ENCODE measurements at regions of chr11 and their contacts with region 1.

Region 1: GRCh38 chr11:95067039-95067840 is 521 bp downstream of the SRSF8 start:
- DNase-seq: peak; percentile 89
- H3K4me3 ChIP-seq: peak overlapping the region; percentile 68
- H3K27ac ChIP-seq: peak overlapping the region; percentile 86
- H3K4me1 ChIP-seq: peaks cover 9% of the 10 kb centered on the region
- H3K27me3 ChIP-seq: no peaks in the 10 kb centered on the region
- CTCF ChIP-seq: peak; percentile 64

Region 2: GRCh38 chr11:94776351-94777321 is 290.6 kb before region 1 on chr11:
- CTCF ChIA-PET with region 1: no interaction called
- POLR2A ChIA-PET with region 1: no interaction called
- intact Hi-C with region 1: loop called (anchors 10 kb)
- DNase-seq: peak; percentile 77
- H3K4me3 ChIP-seq: no peak overlapping the region
- H3K27ac ChIP-seq: no peak overlapping the region
- H3K4me1 ChIP-seq: peaks cover 28% of the 10 kb centered on the region
- H3K27me3 ChIP-seq: no peaks in the 10 kb centered on the region
- CTCF ChIP-seq: no peak

Region 3: GRCh38 chr11:94849839-94850238 is 217.4 kb before region 1 on chr11:
- CTCF ChIA-PET with region 1: no interaction called
- POLR2A ChIA-PET with region 1: no interaction called
- intact Hi-C with region 1: no loop called
- DNase-seq: peak; percentile 76
- H3K4me3 ChIP-seq: no peak overlapping the region
- H3K27ac ChIP-seq: peak overlapping the region; percentile 17
- H3K4me1 ChIP-seq: peaks cover 8% of the 10 kb centered on the region
- H3K27me3 ChIP-seq: no peaks in the 10 kb centered on the region
- CTCF ChIP-seq: no peak

Region 4: DNA sequence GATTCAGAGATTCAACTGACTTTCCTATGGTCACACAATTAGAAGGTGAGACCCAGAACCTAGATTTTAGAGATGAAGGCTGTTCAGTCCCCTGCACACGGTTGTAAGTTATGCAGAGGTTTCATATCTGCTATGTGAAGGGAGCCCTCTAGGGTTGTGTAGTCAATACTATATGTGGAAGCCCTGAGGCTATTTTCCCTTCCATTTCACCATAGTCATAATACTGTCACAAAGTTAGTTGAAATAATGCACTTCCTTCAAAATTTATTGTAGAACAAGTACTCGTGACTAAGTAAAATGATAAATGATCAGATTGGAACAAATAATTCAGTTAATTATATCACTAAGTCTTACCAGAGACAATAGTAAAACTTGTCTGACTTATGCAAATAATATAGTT is 71.2 kb after region 1 on chr11:
- CTCF ChIA-PET with region 1: interaction called, 3 read pairs
- POLR2A ChIA-PET with region 1: no interaction called
- intact Hi-C with region 1: loop called (anchors 2 kb)
- DNase-seq: peak; percentile 53
- H3K4me3 ChIP-seq: no peak overlapping the region
- H3K27ac ChIP-seq: no peak overlapping the region
- H3K4me1 ChIP-seq: no peaks in the 10 kb centered on the region
- H3K27me3 ChIP-seq: no peaks in the 10 kb centered on the region
- CTCF ChIP-seq: peak; percentile 63

Region 5: GRCh38 chr11:95705485-95706124 is 638.4 kb after region 1 on chr11:
- CTCF ChIA-PET with region 1: interaction called, 6 read pairs
- POLR2A ChIA-PET with region 1: no interaction called
- intact Hi-C with region 1: loop called (anchors 2 kb)
- DNase-seq: peak; percentile 85
- H3K4me3 ChIP-seq: no peak overlapping the region
- H3K27ac ChIP-seq: no peak overlapping the region
- H3K4me1 ChIP-seq: no peaks in the 10 kb centered on the region
- H3K27me3 ChIP-seq: no peaks in the 10 kb centered on the region
- CTCF ChIP-seq: peak; percentile 99

Region 6: GRCh38 chr11:96424693-96425092 is 1357.5 kb after region 1 on chr11:
- CTCF ChIA-PET with region 1: no interaction called
- POLR2A ChIA-PET with region 1: no interaction called
- intact Hi-C with region 1: loop called (anchors 5 kb)
- DNase-seq: peak; percentile 46
- H3K4me3 ChIP-seq: no peak overlapping the region
- H3K27ac ChIP-seq: no peak overlapping the region
- H3K4me1 ChIP-seq: no peaks in the 10 kb centered on the region
- H3K27me3 ChIP-seq: no peaks in the 10 kb centered on the region
- CTCF ChIP-seq: no peak